Ovary (tissue), 10 donors: ENCODE measurements at regions of chr6 and their contacts with region 1.

Region 1: DNA sequence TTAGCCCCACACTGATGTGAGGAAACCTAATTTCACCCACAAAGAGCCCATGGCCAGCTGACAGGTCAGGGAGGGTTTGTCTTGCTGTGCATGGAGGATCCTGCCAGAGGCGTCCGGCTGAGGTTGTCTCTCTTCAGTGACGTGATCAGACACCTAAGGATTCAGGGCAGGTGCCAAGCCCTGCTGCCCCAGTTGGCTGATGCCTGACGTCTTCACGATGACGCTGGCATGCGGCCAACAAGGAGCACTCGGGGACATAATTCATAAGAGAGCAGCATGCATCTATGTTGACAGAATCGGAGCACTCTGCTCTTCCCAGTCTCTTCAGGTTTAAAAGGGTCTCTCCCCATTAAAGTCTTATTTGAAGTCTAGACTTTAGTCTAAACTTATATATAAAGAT is 47.8 kb downstream of the PSMB1 start:
- DNase-seq: no peak
- H3K4me3 ChIP-seq: no peak overlapping the region
- H3K27ac ChIP-seq: no peak overlapping the region
- H3K4me1 ChIP-seq: no peaks in the 10 kb centered on the region
- H3K27me3 ChIP-seq: no peaks in the 10 kb centered on the region
- CTCF ChIP-seq: no peak
- EP300 ChIP-seq: no peak
- POLR2A ChIP-seq: no peak

Region 2: GRCh38 chr6:169959136-169960002 is 545.9 kb before region 1 on chr6:
- intact Hi-C with region 1: loop called in 1 of 4 experiments (anchors 10 kb)
- DNase-seq: peak in 4 of 5 donors; percentile 18 to 61 (median 47)
- H3K4me3 ChIP-seq: no peak overlapping the region
- H3K27ac ChIP-seq: no peak overlapping the region
- H3K4me1 ChIP-seq: no peaks in the 10 kb centered on the region
- H3K27me3 ChIP-seq: no peaks in the 10 kb centered on the region
- CTCF ChIP-seq: no peak
- EP300 ChIP-seq: no peak
- POLR2A ChIP-seq: no peak